Right lobe of liver (tissue), 6 donors: ENCODE measurements at regions of chr11 and their contacts with region 1.

Region 1: GRCh38 chr11:118380571-118380970 is 20.8 kb upstream of the ATP5MG start:
- DNase-seq: no peak
- ATAC-seq: no peak
- H3K4me3 ChIP-seq: no peak overlapping the region
- H3K27ac ChIP-seq: no peak overlapping the region
- H3K4me1 ChIP-seq: no peaks in the 10 kb centered on the region
- H3K27me3 ChIP-seq: no peaks in the 10 kb centered on the region
- CTCF ChIP-seq: no peak
- POLR2A ChIP-seq: no peak

Region 2: DNA sequence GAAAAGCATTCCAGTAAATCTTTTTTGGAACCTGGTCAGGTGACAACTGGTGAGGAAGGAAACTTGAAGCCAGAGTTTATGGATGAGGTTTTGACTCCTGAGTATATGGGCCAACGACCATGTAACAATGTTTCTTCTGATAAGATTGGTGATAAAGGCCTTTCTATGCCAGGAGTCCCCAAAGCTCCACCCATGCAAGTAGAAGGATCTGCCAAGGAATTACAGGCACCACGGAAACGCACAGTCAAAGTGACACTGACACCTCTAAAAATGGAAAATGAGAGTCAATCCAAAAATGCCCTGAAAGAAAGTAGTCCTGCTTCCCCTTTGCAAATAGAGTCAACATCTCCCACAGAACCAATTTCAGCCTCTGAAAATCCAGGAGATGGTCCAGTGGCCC is 122.6 kb after region 1 on chr11:
- intact Hi-C with region 1: loop called (anchors 10 kb)
- DNase-seq: no peak
- ATAC-seq: no peak
- H3K4me3 ChIP-seq: no peak overlapping the region
- H3K27ac ChIP-seq: no peak overlapping the region
- H3K4me1 ChIP-seq: no peaks in the 10 kb centered on the region
- H3K27me3 ChIP-seq: no peaks in the 10 kb centered on the region
- CTCF ChIP-seq: no peak
- POLR2A ChIP-seq: no peak